HCT116 (cell line): ENCODE measurements at regions of chr10 and their contacts with region 1.

Region 1: GRCh38 chr10:80078448-80079311 is at the start of gene TMEM254:
- DNase-seq: peak; percentile 71
- ATAC-seq: peak; percentile 90
- H3K4me3 ChIP-seq: peak within 1 kb of the TSS; percentile 71 to 90
- H3K27ac ChIP-seq: peak within 1 kb of the TSS; percentile 87
- H3K4me1 ChIP-seq: peaks cover 9 to 15% of the 10 kb centered on the region in 2 experiments; a peak in 3 of 4 replicates
- H3K27me3 ChIP-seq: no peaks in the 10 kb centered on the region
- CTCF ChIP-seq: no peak
- POLR2A ChIP-seq: peak; percentile 14
- RAD21 ChIP-seq: no peak
- total RNA-seq, gene TMEM254: 12.1 TPM

Region 2: GRCh38 chr10:80064120-80064886 is 14.4 kb before region 1 on chr10:
- CTCF ChIA-PET with region 1: interaction called, 11 read pairs
- POLR2A ChIA-PET with region 1: interaction called, 4 read pairs
- RAD21 ChIA-PET with region 1: no interaction called
- intact Hi-C with region 1: no loop called
- DNase-seq: no peak
- ATAC-seq: no peak
- H3K4me3 ChIP-seq: no peak overlapping the region
- H3K27ac ChIP-seq: no peak overlapping the region
- H3K4me1 ChIP-seq: no peaks in the 10 kb centered on the region
- H3K27me3 ChIP-seq: no peaks in the 10 kb centered on the region
- CTCF ChIP-seq: no peak
- POLR2A ChIP-seq: no peak
- RAD21 ChIP-seq: no peak